ENCODE measurements at regions of chr2 and their contacts with region 1.

Region 1: GRCh38 chr2:63698825-63699548 is 110.2 kb downstream of the MDH1 start:
- DNase-seq: peak; percentile 81 to 83
- H3K4me3 ChIP-seq: no peak overlapping the region
- H3K27ac ChIP-seq: peak overlapping the region; percentile 11 to 53
- H3K4me1 ChIP-seq: peaks cover 0 to 17% (median 7%) of the 10 kb centered on the region in 4 donors
- H3K27me3 ChIP-seq: no peaks in the 10 kb centered on the region
- CTCF ChIP-seq: peak; percentile 59 to 65

Region 2: GRCh38 chr2:63861220-63861822 is 162.3 kb after region 1 on chr2:
- intact Hi-C with region 1: loop called (anchors 5 kb)
- DNase-seq: peak; percentile 49 to 69
- H3K4me3 ChIP-seq: no peak overlapping the region
- H3K27ac ChIP-seq: peak overlapping the region; percentile 1 to 35
- H3K4me1 ChIP-seq: peaks cover 0 to 51% (median 7%) of the 10 kb centered on the region in 4 donors
- H3K27me3 ChIP-seq: no peaks in the 10 kb centered on the region
- CTCF ChIP-seq: peak; percentile 57 to 72

Measured in tibial artery (tissue), 4 donors.